ENCODE measurements at regions of chr5 and their contacts with region 1.

Region 1: DNA sequence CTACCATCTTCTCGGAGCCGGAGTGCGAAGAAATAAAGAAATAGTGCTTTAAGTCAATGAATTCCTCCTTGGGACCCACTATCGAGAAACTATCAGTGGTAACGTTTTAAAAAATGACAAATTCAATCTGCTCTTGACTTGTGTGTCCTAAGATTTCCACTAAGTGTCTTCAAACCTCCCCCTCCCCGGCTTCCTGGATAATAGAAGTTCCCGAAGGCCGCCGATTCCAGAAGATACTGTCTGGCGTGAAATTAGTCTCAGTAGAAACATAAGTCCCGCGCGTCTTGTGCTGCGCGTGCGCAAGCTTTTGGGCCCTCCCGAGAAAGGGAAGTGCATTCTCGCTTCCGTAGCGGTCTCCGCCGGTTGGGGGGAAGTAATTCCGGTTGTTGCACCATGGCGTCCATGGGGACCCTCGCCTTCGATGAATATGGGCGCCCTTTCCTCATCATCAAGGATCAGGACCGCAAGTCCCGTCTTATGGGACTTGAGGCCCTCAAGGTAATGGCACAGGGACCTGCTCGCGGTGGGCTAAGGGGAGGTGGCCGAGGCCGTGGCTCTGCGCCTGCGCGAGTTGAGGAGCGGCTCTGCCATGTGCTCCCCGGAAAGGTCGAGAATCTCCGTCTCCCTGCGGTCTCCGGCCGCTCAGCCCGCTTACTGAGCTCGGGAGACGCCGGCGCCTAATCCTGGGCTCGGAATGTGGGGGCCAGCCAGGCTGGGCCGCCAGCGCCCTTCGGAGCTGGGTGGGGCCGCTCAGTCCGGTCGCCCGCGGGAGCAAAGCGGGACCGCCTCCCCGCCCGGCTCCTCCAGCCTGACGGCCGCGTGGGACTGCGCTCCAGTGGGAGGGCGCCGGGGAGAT is at the start of gene CCT5:
- DNase-seq: peak; percentile 93 to 94
- ATAC-seq: peak; percentile 94
- H3K4me3 ChIP-seq: peak within 1 kb of the TSS; percentile 68 to 99 (median 96)
- H3K27ac ChIP-seq: peak within 1 kb of the TSS; percentile 92 to 97 (median 95)
- H3K4me1 ChIP-seq: peaks cover 27 to 30% of the 10 kb centered on the region in 2 donors
- H3K27me3 ChIP-seq: no peaks in the 10 kb centered on the region
- CTCF ChIP-seq: no peak
- POLR2A ChIP-seq: peak; percentile 30 to 64
- total RNA-seq, gene CCT5: 201 to 329 (median 267) TPM

Region 2: GRCh38 chr5:10432059-10433008 is 182.2 kb after region 1 on chr5:
- in situ Hi-C with region 1: loop called in 1 of 4 experiments (anchors 10 kb)
- intact Hi-C with region 1: no loop called
- DNase-seq: peak in 1 of 2 donors; percentile 71
- ATAC-seq: peak; percentile 38 to 87
- H3K4me3 ChIP-seq: no peak overlapping the region
- H3K27ac ChIP-seq: peak overlapping the region in 3 of 4 donors; percentile 23 to 48 (median 47)
- H3K4me1 ChIP-seq: peaks cover 7 to 15% of the 10 kb centered on the region in 2 donors
- H3K27me3 ChIP-seq: no peaks in the 10 kb centered on the region
- CTCF ChIP-seq: no peak
- POLR2A ChIP-seq: no peak

Region 3: DNA sequence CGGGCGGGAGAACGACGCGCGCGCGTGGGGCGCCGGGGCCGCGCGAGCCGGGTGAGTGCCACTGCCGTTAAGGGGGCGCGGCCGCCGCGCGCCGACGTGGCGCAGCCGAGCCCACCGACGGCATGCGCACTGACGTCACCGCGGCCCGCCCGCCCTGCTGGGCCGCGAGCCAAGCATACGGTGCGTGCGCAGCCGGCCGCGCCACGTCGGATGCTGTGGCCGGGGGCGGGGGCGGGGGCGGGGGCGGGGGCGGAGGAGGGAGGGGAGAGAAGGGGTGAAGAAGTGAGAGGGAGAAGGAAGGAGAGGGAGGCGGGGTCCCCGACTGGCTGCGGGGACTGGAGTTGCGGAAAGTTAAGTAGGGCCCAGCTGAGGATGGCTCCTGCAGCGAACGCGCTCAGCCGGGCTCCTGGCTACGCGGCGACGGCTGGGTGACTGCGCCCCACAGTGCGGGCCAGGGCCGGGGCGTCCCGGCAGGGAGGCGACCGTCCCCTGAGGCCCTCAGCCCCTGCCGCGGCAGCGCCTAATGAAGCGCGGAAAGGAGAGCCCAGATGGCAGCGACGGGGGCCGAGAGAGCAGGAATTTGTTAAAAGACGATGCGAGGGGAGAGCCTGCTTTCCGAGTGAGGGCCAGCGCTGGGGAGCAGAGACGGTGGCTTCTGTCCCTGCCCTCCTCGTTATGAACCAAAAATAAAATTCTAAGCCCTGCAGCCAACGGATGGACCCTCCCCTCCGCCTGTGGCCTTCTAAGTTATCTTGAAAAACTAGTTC is 511.2 kb after region 1 on chr5 and contains the start of gene DAP:
- in situ Hi-C with region 1: no loop called
- intact Hi-C with region 1: loop called (anchors 5 kb)
- DNase-seq: peak; percentile 38 to 61
- ATAC-seq: peak; percentile 73 to 77
- H3K4me3 ChIP-seq: peak within 1 kb of the TSS; percentile 54 to 81 (median 62)
- H3K27ac ChIP-seq: peak within 1 kb of the TSS; percentile 73 to 89 (median 80)
- H3K4me1 ChIP-seq: peaks cover 0 to 4% of the 10 kb centered on the region in 2 donors
- H3K27me3 ChIP-seq: no peaks in the 10 kb centered on the region
- CTCF ChIP-seq: no peak
- POLR2A ChIP-seq: peak; percentile 58 to 72
- total RNA-seq, gene DAP: 2.4 to 11.7 (median 3.6) TPM

Region 4: GRCh38 chr5:11407556-11408145 is 1157.5 kb after region 1 on chr5:
- in situ Hi-C with region 1: no loop called
- intact Hi-C with region 1: no loop called
- DNase-seq: no peak
- ATAC-seq: no peak
- H3K4me3 ChIP-seq: no peak overlapping the region
- H3K27ac ChIP-seq: no peak overlapping the region
- H3K4me1 ChIP-seq: no peaks in the 10 kb centered on the region
- H3K27me3 ChIP-seq: no peaks in the 10 kb centered on the region
- CTCF ChIP-seq: no peak
- POLR2A ChIP-seq: no peak

Measured in gastrocnemius medialis (tissue), 4 donors.